ENCODE measurements at regions of chr1 and their contacts with region 1.

Region 1: GRCh38 chr1:201895913-201896807 is 7.5 kb downstream of the SHISA4 start:
- DNase-seq: peak; percentile 92
- H3K4me3 ChIP-seq: no peak overlapping the region
- H3K27ac ChIP-seq: no peak overlapping the region
- H3K4me1 ChIP-seq: no peaks in the 10 kb centered on the region
- H3K27me3 ChIP-seq: no peaks in the 10 kb centered on the region
- CTCF ChIP-seq: peak; percentile 89

Region 2: GRCh38 chr1:201970334-201971159 is 74.4 kb after region 1 on chr1:
- intact Hi-C with region 1: loop called (anchors 5 kb)
- DNase-seq: no peak
- H3K4me3 ChIP-seq: no peak overlapping the region
- H3K27ac ChIP-seq: no peak overlapping the region
- H3K4me1 ChIP-seq: no peaks in the 10 kb centered on the region
- H3K27me3 ChIP-seq: no peaks in the 10 kb centered on the region
- CTCF ChIP-seq: no peak

Region 3: GRCh38 chr1:202023033-202023486 is 126.9 kb after region 1 on chr1:
- intact Hi-C with region 1: no loop called
- DNase-seq: peak; percentile 97
- H3K4me3 ChIP-seq: no peak overlapping the region
- H3K27ac ChIP-seq: peak overlapping the region; percentile 69
- H3K4me1 ChIP-seq: peaks cover 5% of the 10 kb centered on the region
- H3K27me3 ChIP-seq: no peaks in the 10 kb centered on the region
- CTCF ChIP-seq: no peak

Region 4: DNA sequence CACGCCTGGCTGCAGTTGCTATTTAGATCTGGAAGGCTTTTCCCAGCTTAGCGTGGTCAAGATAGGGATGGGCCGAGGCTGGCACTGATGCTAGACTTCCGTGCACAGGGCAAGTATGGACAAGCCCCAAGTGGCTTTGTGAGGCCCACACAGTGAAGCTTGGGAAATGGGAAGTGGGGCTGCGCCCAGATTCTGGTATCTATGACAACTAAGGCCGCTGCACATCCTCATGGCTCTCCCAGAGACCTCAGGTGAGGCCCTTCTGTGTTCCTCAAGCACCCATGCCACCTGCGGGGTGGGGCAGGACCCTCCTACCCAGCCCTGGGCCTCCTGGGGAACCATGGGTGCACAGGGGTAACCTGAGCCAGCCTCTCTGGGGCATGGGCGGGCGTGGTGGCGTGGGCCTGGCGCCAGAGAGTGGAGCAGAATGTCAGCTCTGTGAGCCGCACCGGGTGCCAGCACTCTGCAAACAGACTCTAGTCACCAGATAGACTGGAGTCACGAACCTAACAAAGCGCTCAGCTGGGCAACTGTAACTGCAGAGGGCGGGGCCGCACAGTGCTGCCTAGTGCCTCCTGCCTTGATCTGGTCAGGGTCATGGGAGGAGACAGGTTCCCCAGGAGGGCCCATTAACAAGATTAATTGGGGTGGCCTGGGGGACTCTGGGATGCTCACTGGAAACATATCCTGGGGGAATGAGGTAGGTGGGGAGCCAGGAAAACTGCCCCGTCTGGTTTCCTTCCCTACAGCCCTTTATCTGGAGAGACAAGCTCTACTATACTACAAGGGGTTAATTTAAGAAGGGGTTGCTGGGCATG is 160.7 kb after region 1 on chr1:
- intact Hi-C with region 1: no loop called
- DNase-seq: peak; percentile 94
- H3K4me3 ChIP-seq: no peak overlapping the region
- H3K27ac ChIP-seq: peak overlapping the region; percentile 85
- H3K4me1 ChIP-seq: no peaks in the 10 kb centered on the region
- H3K27me3 ChIP-seq: no peaks in the 10 kb centered on the region
- CTCF ChIP-seq: no peak

Region 5: DNA sequence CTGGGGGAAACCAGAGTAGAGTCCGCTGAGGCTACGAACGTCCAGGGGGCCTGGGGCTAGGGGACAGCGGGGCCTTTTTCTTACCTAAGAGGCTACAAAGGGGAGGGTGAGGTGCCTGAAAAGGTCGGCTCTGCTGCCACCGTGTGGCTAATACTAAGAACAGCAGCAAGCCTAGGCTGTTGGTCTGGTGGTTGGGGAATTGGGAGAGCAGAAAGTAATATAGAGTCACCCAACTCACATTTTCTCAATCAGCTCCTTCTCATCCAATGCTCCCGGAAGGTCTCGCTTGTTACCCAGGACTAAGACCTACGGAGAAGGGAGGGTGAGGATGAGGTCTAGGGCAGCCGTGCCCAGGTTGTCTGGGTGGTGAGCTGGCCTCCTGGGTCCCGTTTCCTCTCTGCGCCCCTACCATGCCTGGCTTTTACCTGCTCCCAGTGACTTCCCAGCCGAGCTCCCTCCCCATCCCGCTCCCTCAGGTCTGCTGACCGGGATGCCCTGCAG is 239.1 kb after region 1 on chr1:
- intact Hi-C with region 1: loop called (anchors 5 kb)
- DNase-seq: peak; percentile 61
- H3K4me3 ChIP-seq: no peak overlapping the region
- H3K27ac ChIP-seq: no peak overlapping the region
- H3K4me1 ChIP-seq: no peaks in the 10 kb centered on the region
- H3K27me3 ChIP-seq: no peaks in the 10 kb centered on the region
- CTCF ChIP-seq: peak; percentile 86

Measured in colonic mucosa (tissue), 4 donors.